Astrocyte of the cerebellum (primary cell): ENCODE measurements at regions of chr4 and their contacts with region 1.

Region 1: DNA sequence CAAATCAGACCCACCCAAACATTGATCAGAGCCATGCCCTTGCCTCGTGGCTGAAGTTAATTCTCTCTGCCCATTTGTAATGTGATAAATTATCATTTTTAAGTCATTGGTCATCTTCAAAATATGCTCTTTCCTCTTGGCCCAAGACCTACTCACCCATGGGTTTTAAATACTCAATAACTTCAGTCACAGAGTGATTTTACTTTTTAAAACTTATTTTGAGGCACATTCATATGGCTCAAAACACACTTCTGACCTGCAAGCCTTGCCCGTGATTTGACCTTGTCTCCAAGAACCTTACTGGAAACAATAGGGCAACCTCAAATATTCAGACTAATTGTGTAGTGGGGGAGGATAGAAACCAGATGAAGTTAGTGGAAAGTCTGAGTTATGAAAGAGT is 176.2 kb upstream of the LNX1 start:
- DNase-seq: peak; percentile 61
- H3K4me3 ChIP-seq: no peak overlapping the region
- CTCF ChIP-seq: no peak

Region 2: DNA sequence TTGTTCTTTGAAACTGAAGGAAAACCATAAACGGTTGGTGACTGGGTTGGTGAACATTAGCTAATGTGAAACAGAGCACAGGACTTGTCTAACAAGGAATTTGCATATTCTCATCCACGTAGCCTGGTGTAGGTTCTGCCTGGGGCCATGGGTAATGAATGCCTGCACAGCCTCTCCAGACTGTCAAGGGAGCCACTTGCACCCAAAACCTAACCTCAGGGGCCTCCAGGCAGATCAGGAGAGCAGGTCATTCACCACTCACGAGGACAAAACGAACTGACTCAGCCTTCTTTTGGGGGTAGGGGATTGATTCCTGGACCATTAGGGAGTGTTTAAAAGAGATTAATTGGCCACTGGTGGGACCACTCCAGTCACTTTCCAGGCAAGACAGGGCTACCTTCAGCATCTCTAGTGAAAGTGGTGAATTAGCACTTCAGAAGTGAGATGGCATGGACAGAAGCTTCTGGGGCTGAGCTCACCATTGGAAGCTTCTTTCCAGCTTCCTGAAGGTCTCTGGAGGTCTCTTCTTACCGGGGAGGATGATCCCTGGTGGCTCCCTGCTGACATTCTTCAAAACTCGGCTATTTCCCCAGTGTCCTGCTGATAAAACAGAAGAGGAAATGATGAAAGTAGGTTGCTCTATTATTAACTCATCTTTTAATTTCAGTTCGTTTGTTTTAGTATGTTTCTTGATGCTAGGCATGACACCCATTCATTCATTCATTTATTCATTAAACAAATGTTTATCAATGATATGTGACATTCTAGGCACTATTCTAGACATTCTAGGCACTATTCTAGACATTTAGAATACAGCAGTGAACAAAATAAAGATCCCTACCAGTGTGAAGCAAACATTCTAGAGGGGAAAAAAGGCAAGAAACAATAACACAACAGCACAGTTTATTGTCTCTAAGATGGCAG is 71.7 kb before region 1 on chr4:
- in situ Hi-C with region 1: loop called (anchors 5 kb)
- DNase-seq: no peak
- H3K4me3 ChIP-seq: no peak overlapping the region
- CTCF ChIP-seq: no peak

Region 3: GRCh38 chr4:53721263-53721662 is 46.2 kb before region 1 on chr4:
- in situ Hi-C with region 1: loop called (anchors 5 kb)
- DNase-seq: no peak
- H3K4me3 ChIP-seq: no peak overlapping the region
- CTCF ChIP-seq: no peak